GM12878 (cell line): ENCODE measurements at regions of chr12 and their contacts with region 1.

Region 1: DNA sequence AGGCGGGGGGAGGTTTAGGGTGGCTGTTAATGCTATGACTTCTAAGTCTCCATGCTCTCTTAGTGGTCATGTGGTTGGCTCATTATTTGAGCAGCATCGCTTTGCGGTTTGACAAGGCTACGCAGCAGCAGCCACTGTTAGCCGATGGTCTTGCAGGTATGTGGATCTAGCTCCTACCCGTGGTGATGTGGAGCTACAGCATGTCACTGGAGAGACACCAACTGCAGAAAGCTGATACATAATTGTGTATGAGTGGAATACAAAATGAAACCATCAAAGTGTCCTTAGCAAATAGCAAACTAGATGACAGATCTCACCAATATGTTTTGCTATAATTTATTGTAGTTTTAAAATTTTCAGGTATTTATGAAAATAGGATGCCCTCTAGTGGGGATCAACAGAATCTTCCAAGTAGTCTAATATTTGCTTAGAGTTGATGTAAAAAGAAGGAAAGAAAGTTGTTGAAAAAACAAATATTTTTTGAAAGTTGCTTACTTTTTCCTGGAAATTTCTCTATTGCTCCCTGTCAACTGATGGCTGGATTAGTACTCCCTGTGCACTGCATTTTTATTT is 94.9 kb downstream of the NAV3 start:
- DNase-seq: peak; percentile 45
- ATAC-seq: peak; percentile 100
- H3K4me3 ChIP-seq: no peak overlapping the region
- H3K27ac ChIP-seq: no peak overlapping the region
- H3K4me1 ChIP-seq: no peaks in the 10 kb centered on the region
- H3K27me3 ChIP-seq: no peaks in the 10 kb centered on the region
- CTCF ChIP-seq: peak; percentile 85 to 98 (median 98)
- EP300 ChIP-seq: no peak
- POLR2A ChIP-seq: no peak
- RAD21 ChIP-seq: peak; percentile 93

Region 2: GRCh38 chr12:76738934-76739586 is 1186.6 kb before region 1 on chr12:
- CTCF ChIA-PET with region 1: no interaction called
- POLR2A ChIA-PET with region 1: no interaction called
- RAD21 ChIA-PET with region 1: no interaction called
- SMC1A ChIA-PET with region 1: no interaction called
- in situ Hi-C with region 1: no loop called
- intact Hi-C with region 1: no loop called
- DNase-seq: no peak
- ATAC-seq: no peak
- H3K4me3 ChIP-seq: no peak overlapping the region
- H3K27ac ChIP-seq: no peak overlapping the region
- H3K4me1 ChIP-seq: no peaks in the 10 kb centered on the region
- H3K27me3 ChIP-seq: no peaks in the 10 kb centered on the region
- CTCF ChIP-seq: no peak
- EP300 ChIP-seq: no peak
- POLR2A ChIP-seq: no peak
- RAD21 ChIP-seq: no peak

Region 3: GRCh38 chr12:77724367-77724957 is 201.2 kb before region 1 on chr12:
- CTCF ChIA-PET with region 1: interaction called, 50 read pairs
- POLR2A ChIA-PET with region 1: no interaction called
- RAD21 ChIA-PET with region 1: interaction called, 27 read pairs
- SMC1A ChIA-PET with region 1: interaction called, 34 read pairs
- in situ Hi-C with region 1: loop called (anchors 5 kb)
- intact Hi-C with region 1: loop called (anchors 1 kb)
- DNase-seq: no peak
- ATAC-seq: peak; percentile 83
- H3K4me3 ChIP-seq: no peak overlapping the region
- H3K27ac ChIP-seq: no peak overlapping the region
- H3K4me1 ChIP-seq: no peaks in the 10 kb centered on the region
- H3K27me3 ChIP-seq: no peaks in the 10 kb centered on the region
- CTCF ChIP-seq: peak; percentile 55 to 79 (median 65); a peak in 5 of 6 replicates
- EP300 ChIP-seq: no peak
- POLR2A ChIP-seq: no peak
- RAD21 ChIP-seq: peak; percentile 94

Region 4: DNA sequence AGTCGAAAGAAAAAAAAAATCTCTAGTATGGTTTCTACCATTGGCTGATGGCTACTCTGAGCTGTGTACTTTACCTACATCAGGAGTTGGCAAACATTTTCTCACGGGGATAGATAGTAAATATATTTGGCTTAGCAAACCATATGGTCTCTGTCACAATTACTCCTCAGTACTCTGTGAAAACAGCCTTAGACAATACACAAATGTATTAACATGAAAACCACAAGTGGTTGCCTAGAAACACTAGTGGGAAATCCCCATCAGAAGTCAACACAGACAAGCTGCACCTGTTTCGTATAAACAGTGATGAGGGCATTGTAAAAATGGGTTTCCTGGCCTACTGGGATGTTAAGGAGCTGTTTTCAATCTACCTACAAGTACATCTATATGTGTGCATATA is 179.5 kb before region 1 on chr12:
- CTCF ChIA-PET with region 1: interaction called, 23 read pairs
- POLR2A ChIA-PET with region 1: interaction called, 3 read pairs
- RAD21 ChIA-PET with region 1: interaction called, 12 read pairs
- SMC1A ChIA-PET with region 1: interaction called, 11 read pairs
- in situ Hi-C with region 1: no loop called
- intact Hi-C with region 1: no loop called
- DNase-seq: peak; percentile 83
- ATAC-seq: peak; percentile 96
- H3K4me3 ChIP-seq: no peak overlapping the region
- H3K27ac ChIP-seq: no peak overlapping the region; the same call in 1 of the 2 replicates
- H3K4me1 ChIP-seq: peaks cover 10% of the 10 kb centered on the region
- H3K27me3 ChIP-seq: no peaks in the 10 kb centered on the region
- CTCF ChIP-seq: no peak
- EP300 ChIP-seq: peak; percentile 65 to 87; a peak in 3 of 4 replicates
- POLR2A ChIP-seq: no peak
- RAD21 ChIP-seq: no peak

Region 5: DNA sequence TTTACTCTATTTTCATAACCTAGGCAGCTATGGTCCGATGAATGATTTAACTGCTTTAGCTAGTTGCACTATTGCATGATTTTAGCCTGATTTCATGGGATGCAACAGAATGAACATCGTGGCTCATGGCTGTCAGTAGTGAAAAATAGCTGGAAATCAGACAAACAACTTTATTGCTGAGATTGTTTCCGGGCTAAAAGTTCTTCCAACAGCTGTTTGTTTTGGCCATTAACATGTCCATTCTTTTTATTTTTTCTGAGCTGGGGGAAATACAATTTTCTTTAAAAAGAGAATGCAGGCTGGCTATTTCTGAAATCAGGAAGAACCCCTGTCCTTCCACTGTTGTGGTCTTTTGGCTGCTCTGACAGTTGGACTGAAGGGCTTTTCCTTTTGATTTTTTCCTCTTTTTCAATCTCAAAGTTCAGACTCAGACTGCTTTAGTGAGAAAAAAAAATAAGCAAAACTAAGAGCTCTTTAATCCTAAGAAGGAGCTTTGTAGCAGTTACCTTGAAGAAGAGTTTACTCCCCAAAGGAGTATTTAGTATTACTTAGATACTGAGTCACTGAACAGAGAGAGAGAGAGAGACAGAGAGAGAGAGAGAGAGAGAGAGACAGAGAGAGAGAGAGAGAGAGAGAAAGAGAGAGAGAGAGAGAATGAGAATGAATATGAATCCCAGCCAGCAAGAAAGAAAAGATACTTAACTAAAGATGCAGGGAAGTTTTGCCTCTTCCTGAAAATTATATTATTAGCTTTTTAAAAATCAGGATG is 94.9 kb before region 1 on chr12 and contains the start of gene NAV3:
- CTCF ChIA-PET with region 1: interaction called, 10 read pairs
- POLR2A ChIA-PET with region 1: no interaction called
- RAD21 ChIA-PET with region 1: no interaction called
- SMC1A ChIA-PET with region 1: interaction called, 3 read pairs
- in situ Hi-C with region 1: no loop called
- intact Hi-C with region 1: no loop called
- DNase-seq: no peak
- ATAC-seq: no peak
- H3K4me3 ChIP-seq: no peak within 1 kb of the TSS
- H3K27ac ChIP-seq: no peak within 1 kb of the TSS
- H3K4me1 ChIP-seq: no peaks in the 10 kb centered on the region
- H3K27me3 ChIP-seq: no peaks in the 10 kb centered on the region
- CTCF ChIP-seq: no peak
- EP300 ChIP-seq: no peak
- POLR2A ChIP-seq: no peak
- RAD21 ChIP-seq: no peak
- polyA plus RNA-seq, gene NAV3: 0.05 TPM in 1 of 2 experiments, not detected in the other

Region 6: DNA sequence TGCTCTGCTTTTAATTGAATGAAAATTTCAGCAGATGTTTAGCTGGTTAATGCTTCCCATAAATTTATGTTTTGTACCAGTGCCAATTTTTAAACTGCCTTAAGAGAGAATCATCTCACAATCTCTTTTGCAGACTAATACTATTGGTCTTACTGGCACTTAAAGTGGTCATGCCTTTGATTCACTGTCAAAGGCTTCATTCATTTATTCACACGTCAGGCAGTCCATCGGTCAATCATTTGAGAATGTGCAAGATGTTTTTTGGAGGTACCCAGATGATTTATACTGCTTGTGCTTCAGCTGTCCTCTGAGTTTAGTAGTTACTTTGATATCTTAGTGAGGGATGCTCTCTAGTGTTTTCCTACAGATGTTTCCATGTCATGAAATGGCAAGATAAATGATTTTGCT is 11.5 kb before region 1 on chr12:
- CTCF ChIA-PET with region 1: interaction called, 40 read pairs
- POLR2A ChIA-PET with region 1: no interaction called
- RAD21 ChIA-PET with region 1: interaction called, 6 read pairs
- SMC1A ChIA-PET with region 1: interaction called, 9 read pairs
- in situ Hi-C with region 1: no loop called
- intact Hi-C with region 1: no loop called
- DNase-seq: no peak
- ATAC-seq: no peak
- H3K4me3 ChIP-seq: no peak overlapping the region
- H3K27ac ChIP-seq: no peak overlapping the region
- H3K4me1 ChIP-seq: no peaks in the 10 kb centered on the region
- H3K27me3 ChIP-seq: no peaks in the 10 kb centered on the region
- CTCF ChIP-seq: peak in 1 of 3 experiments; percentile 21; a peak in 1 of 6 replicates
- EP300 ChIP-seq: no peak
- POLR2A ChIP-seq: no peak
- RAD21 ChIP-seq: peak; percentile 41

Region 7: DNA sequence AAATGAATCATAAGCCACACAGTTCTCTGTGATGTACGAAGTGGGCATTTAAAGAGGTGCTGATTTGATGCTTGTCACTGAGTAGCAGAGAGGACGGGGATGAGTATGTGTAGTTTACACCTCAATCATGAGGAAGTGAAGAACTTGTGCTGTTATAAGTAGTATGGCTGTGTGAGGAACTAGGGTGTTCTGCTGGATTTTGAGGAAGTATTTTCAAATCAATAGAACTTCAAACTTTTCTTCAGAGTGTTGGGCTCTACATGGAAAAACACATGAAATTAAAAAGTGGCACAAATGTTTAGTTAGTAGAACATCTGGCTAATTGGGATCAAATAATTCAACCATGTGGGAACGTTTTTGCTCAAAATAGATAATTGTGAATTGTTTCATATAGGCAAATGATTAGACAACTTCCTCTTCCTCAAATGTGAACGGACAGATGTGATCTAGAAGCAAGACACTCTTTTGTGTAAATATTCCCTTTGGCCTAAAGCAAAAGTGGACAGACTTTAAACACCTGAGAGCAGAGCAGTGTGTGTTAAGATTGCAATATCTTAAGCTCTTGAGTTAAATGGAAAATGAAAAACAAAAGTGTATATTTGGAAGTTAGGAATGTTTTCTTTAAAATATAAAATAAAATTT is 73.6 kb after region 1 on chr12:
- CTCF ChIA-PET with region 1: no interaction called
- POLR2A ChIA-PET with region 1: no interaction called
- RAD21 ChIA-PET with region 1: no interaction called
- SMC1A ChIA-PET with region 1: no interaction called
- in situ Hi-C with region 1: no loop called
- intact Hi-C with region 1: no loop called
- DNase-seq: no peak
- ATAC-seq: peak; percentile 86
- H3K4me3 ChIP-seq: no peak overlapping the region
- H3K27ac ChIP-seq: no peak overlapping the region
- H3K4me1 ChIP-seq: peaks cover 4% of the 10 kb centered on the region
- H3K27me3 ChIP-seq: no peaks in the 10 kb centered on the region
- CTCF ChIP-seq: no peak
- EP300 ChIP-seq: no peak
- POLR2A ChIP-seq: no peak
- RAD21 ChIP-seq: no peak

Region 8: DNA sequence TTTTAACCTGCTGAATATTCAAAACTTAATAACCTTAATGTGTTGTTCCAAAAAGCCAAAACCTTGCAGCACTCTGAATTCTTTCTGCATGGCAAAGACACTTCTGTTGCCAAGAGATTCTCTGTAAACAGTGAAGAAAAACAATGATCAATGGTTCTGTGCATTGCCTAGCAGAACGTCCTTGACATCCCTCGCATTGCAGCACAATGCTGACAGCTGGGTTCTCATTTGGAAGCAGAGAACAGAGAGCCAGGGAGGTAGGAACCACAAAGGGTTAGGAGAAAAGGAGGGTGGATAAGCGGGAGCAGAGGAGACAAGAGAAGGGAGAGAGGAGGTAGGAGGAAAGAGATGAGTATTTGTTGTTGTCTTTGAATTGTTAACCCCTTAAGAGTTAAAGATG is 406.1 kb after region 1 on chr12:
- CTCF ChIA-PET with region 1: no interaction called
- POLR2A ChIA-PET with region 1: no interaction called
- RAD21 ChIA-PET with region 1: no interaction called
- SMC1A ChIA-PET with region 1: no interaction called
- in situ Hi-C with region 1: no loop called
- intact Hi-C with region 1: no loop called
- DNase-seq: no peak
- ATAC-seq: no peak
- H3K4me3 ChIP-seq: no peak overlapping the region
- H3K27ac ChIP-seq: no peak overlapping the region
- H3K4me1 ChIP-seq: no peaks in the 10 kb centered on the region
- H3K27me3 ChIP-seq: no peaks in the 10 kb centered on the region
- CTCF ChIP-seq: no peak
- EP300 ChIP-seq: no peak
- POLR2A ChIP-seq: no peak
- RAD21 ChIP-seq: no peak

Region 9: DNA sequence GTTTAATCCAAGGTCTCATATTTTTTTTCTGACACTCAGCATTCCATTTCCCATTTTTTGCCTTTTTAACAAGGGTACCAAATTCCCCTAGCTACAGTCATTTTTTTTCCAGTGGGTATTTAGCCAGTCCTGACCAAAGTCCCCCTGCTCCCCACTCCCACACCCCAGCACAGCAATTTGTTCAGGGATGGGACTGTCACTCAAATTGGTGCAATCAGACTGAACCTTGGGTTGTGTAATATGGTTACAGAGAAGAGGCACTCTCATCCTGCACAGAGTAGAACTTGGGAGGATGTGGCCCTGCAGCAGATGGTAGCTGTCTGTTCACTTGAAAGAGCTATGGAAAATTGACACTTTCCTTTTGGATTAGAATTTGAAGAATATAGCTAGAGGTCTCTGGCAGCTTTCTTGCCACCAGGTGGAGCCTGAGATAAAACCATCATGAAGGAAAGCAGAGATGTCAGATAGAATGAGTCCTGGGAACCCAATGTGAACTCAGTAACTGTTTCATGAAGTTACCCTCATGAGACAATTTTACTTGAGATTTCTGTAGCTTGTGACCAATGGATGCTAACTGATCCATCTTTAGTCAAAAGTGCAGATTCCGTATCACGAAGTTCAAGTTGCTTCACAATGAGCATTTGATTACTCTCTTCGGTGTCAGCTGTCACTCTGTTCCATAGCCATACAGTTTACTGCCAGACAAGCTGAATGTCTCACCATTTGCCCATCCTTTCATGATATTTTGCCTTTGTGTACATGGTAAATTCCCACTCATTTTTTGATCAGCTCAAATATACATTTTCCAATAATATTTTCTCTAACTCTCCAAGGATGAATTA is 545.0 kb after region 1 on chr12:
- CTCF ChIA-PET with region 1: no interaction called
- POLR2A ChIA-PET with region 1: no interaction called
- RAD21 ChIA-PET with region 1: no interaction called
- SMC1A ChIA-PET with region 1: no interaction called
- in situ Hi-C with region 1: no loop called
- intact Hi-C with region 1: no loop called
- DNase-seq: no peak
- ATAC-seq: peak; percentile 73
- H3K4me3 ChIP-seq: no peak overlapping the region
- H3K27ac ChIP-seq: no peak overlapping the region
- H3K4me1 ChIP-seq: no peaks in the 10 kb centered on the region
- H3K27me3 ChIP-seq: no peaks in the 10 kb centered on the region
- CTCF ChIP-seq: peak; percentile 38 to 52 (median 41); a peak in 4 of 6 replicates
- EP300 ChIP-seq: no peak
- POLR2A ChIP-seq: no peak
- RAD21 ChIP-seq: peak; percentile 36; the same call in 1 of the 2 replicates